CD4-positive, alpha-beta memory T cell (primary cell): ENCODE measurements at regions of chr19 and their contacts with region 1.

Region 1: DNA sequence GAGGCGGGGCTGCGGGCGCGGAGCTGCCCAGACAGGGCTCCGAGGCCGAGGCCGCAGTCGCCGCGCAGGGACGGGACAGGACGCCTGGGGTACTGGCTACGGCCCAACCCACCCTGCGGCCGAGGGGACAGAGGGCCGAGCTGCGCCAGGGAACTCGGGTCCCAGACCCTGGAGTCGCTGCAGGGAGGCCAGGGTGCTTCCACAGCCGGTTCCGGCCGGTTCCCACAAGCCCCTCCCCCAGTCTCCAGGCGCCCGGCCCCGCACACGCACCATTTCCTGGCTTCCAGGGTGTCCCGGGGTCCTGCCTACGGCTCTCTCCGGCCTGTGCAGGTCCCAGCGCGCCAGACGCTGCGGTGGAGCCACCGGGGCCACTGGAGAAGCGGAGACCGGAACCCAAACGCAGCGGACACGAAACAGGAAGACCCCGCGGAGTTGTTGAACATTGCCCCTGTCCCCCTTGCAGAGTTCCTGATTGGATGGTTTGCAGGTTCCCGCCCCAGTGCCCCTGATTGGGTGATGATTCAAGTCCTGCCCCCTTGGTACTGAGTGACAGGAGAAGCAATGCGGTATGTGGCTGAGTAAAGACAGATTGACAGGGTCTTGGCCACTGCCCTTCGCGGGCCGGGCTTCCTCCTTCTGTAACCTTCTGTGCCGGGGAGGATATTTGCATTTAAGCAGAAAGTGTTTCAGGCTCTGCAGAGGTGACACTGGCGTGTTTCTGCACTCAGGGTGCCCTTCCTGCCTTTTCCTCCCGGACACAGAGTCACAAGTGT is at the start of gene ZNF564:
- DNase-seq: peak; percentile 94 to 98 (median 95)
- H3K4me3 ChIP-seq: peak within 1 kb of the TSS; percentile 44 to 98
- H3K4me3 Mint-ChIP-seq: peak within 1 kb of the TSS; percentile 92 to 100 (median 98)
- H3K27ac ChIP-seq: peak within 1 kb of the TSS; percentile 83
- H3K27ac Mint-ChIP-seq: peak within 1 kb of the TSS; percentile 91 to 99 (median 97)
- H3K4me1 ChIP-seq: peaks cover 42% of the 10 kb centered on the region
- H3K4me1 Mint-ChIP-seq: peaks cover 28 to 56% (median 39%) of the 10 kb centered on the region in 4 donors
- H3K27me3 ChIP-seq: no peaks in the 10 kb centered on the region
- H3K27me3 Mint-ChIP-seq: no peaks in the 10 kb centered on the region
- total RNA-seq, gene ZNF564: 29.2 to 30.6 TPM

Region 2: GRCh38 chr19:12453491-12453890 is 97.8 kb before region 1 on chr19:
- CTCF ChIA-PET with region 1: no interaction called
- POLR2A ChIA-PET with region 1: no interaction called
- intact Hi-C with region 1: no loop called
- DNase-seq: no peak
- H3K4me3 ChIP-seq: no peak overlapping the region
- H3K4me3 Mint-ChIP-seq: no peak overlapping the region
- H3K27ac ChIP-seq: no peak overlapping the region
- H3K27ac Mint-ChIP-seq: no peak overlapping the region
- H3K4me1 ChIP-seq: no peaks in the 10 kb centered on the region
- H3K4me1 Mint-ChIP-seq: no peaks in the 10 kb centered on the region
- H3K27me3 ChIP-seq: no peaks in the 10 kb centered on the region
- H3K27me3 Mint-ChIP-seq: no peaks in the 10 kb centered on the region

Region 3: GRCh38 chr19:12484371-12485051 is 66.7 kb before region 1 on chr19 and contains the start of gene ZNF709:
- CTCF ChIA-PET with region 1: no interaction called
- POLR2A ChIA-PET with region 1: interaction called, 3 read pairs
- intact Hi-C with region 1: loop called (anchors 1 kb)
- DNase-seq: peak; percentile 82 to 88 (median 85)
- H3K4me3 ChIP-seq: peak within 1 kb of the TSS; percentile 91 to 99
- H3K4me3 Mint-ChIP-seq: peak within 1 kb of the TSS; percentile 94 to 98 (median 96)
- H3K27ac ChIP-seq: peak within 1 kb of the TSS; percentile 77
- H3K27ac Mint-ChIP-seq: peak within 1 kb of the TSS; percentile 83 to 97 (median 95)
- H3K4me1 ChIP-seq: peaks cover 26% of the 10 kb centered on the region
- H3K4me1 Mint-ChIP-seq: peaks cover 23 to 36% (median 28%) of the 10 kb centered on the region in 4 donors
- H3K27me3 ChIP-seq: no peaks in the 10 kb centered on the region
- H3K27me3 Mint-ChIP-seq: no peaks in the 10 kb centered on the region
- total RNA-seq, gene ZNF709: 7.1 to 9.6 TPM

Region 4: GRCh38 chr19:12766051-12766521 is 214.8 kb after region 1 on chr19:
- CTCF ChIA-PET with region 1: no interaction called
- POLR2A ChIA-PET with region 1: no interaction called
- intact Hi-C with region 1: no loop called
- DNase-seq: peak; percentile 63 to 83 (median 69)
- H3K4me3 ChIP-seq: no peak overlapping the region
- H3K4me3 Mint-ChIP-seq: peak overlapping the region in 1 of 8 donors; percentile 48
- H3K27ac ChIP-seq: no peak overlapping the region
- H3K27ac Mint-ChIP-seq: peak overlapping the region in 1 of 7 donors; percentile 42
- H3K4me1 ChIP-seq: no peaks in the 10 kb centered on the region
- H3K4me1 Mint-ChIP-seq: peaks cover 2 to 14% (median 6%) of the 10 kb centered on the region in 4 donors
- H3K27me3 ChIP-seq: no peaks in the 10 kb centered on the region
- H3K27me3 Mint-ChIP-seq: no peaks in the 10 kb centered on the region